ENCODE measurements at regions of chr1 and their contacts with region 1.

Region 1: GRCh38 chr1:2133039-2133878 is 61.3 kb downstream of the FAAP20 start:
- DNase-seq: peak; percentile 93 to 97 (median 96)
- ATAC-seq: peak; percentile 94
- H3K4me3 ChIP-seq: peak overlapping the region; percentile 66
- H3K4me3 Mint-ChIP-seq: peak overlapping the region; percentile 73 to 88 (median 83)
- H3K27ac ChIP-seq: peak overlapping the region; percentile 80
- H3K27ac Mint-ChIP-seq: peak overlapping the region; percentile 54 to 96 (median 93)
- H3K4me1 ChIP-seq: peaks cover 10% of the 10 kb centered on the region in 2 donors
- H3K4me1 Mint-ChIP-seq: peaks cover 5 to 32% (median 17%) of the 10 kb centered on the region in 7 donors
- H3K27me3 ChIP-seq: no peaks in the 10 kb centered on the region
- H3K27me3 Mint-ChIP-seq: no peaks in the 10 kb centered on the region

Region 2: DNA sequence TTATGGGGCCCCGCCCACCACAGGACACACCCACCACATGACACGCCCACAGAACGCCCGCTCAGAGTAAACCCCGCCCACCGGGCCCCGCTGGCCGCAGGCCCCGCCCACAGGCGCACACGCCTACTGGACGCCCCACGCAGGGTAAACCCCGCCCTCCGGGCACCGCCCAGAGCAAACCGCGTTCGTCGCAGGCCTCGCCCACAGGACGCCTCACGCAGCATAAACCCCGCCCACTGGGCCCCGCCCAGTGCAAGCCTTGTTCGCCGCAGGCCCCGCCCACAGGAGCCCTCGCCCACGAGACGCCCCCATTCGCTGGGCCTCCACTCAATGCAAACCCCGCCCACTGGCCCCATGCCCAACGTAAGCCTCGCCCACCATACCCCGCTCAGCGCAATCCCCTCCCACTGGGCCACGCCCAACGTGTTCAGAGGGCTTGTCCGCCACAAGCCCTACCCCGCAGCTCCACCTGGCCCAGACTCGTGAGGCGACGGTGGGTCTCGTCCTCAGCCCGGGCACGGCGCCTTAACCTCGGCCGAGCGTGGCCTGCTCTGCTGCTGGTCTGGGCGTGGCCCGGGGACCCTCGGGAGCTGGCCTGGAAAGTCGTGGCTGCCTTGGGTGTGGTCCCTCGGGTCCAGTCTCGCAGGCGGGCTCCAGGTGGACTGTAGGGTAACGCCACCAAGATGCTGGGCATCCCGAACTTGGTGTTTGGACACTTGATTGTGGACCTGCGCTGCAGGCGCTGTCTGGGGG is 213.8 kb before region 1 on chr1:
- CTCF ChIA-PET with region 1: no interaction called
- POLR2A ChIA-PET with region 1: no interaction called
- intact Hi-C with region 1: loop called (anchors 1 kb)
- DNase-seq: peak; percentile 99 to 100 (median 100)
- ATAC-seq: peak; percentile 95
- H3K4me3 ChIP-seq: peak overlapping the region; percentile 61
- H3K4me3 Mint-ChIP-seq: peak overlapping the region; percentile 52 to 79 (median 68)
- H3K27ac ChIP-seq: peak overlapping the region; percentile 58
- H3K27ac Mint-ChIP-seq: peak overlapping the region in 8 of 9 donors; percentile 51 to 89 (median 82)
- H3K4me1 ChIP-seq: peaks cover 7 to 16% of the 10 kb centered on the region in 2 donors
- H3K4me1 Mint-ChIP-seq: peaks cover 0 to 7% (median 0%) of the 10 kb centered on the region in 7 donors
- H3K27me3 ChIP-seq: no peaks in the 10 kb centered on the region
- H3K27me3 Mint-ChIP-seq: peaks cover 0 to 4% (median 0%) of the 10 kb centered on the region in 5 donors

Region 3: GRCh38 chr1:2148691-2149090 is 15.4 kb after region 1 on chr1:
- CTCF ChIA-PET with region 1: interaction called, 4 read pairs
- POLR2A ChIA-PET with region 1: no interaction called
- intact Hi-C with region 1: loop called in 1 of 2 experiments (anchors 1 kb)
- DNase-seq: peak in 8 of 9 donors; percentile 33 to 79 (median 67)
- ATAC-seq: peak; percentile 77
- H3K4me3 ChIP-seq: peak overlapping the region; percentile 51
- H3K4me3 Mint-ChIP-seq: no peak overlapping the region
- H3K27ac ChIP-seq: peak overlapping the region; percentile 54
- H3K27ac Mint-ChIP-seq: no peak overlapping the region
- H3K4me1 ChIP-seq: peaks cover 35 to 45% of the 10 kb centered on the region in 2 donors
- H3K4me1 Mint-ChIP-seq: peaks cover 0 to 27% (median 18%) of the 10 kb centered on the region in 7 donors
- H3K27me3 ChIP-seq: no peaks in the 10 kb centered on the region
- H3K27me3 Mint-ChIP-seq: no peaks in the 10 kb centered on the region

Region 4: GRCh38 chr1:2189459-2190425 is 56.5 kb after region 1 on chr1:
- CTCF ChIA-PET with region 1: no interaction called
- POLR2A ChIA-PET with region 1: interaction called, 3 read pairs
- intact Hi-C with region 1: loop called (anchors 1 to 2 kb)
- DNase-seq: peak; percentile 78 to 95 (median 91)
- ATAC-seq: peak; percentile 95
- H3K4me3 ChIP-seq: peak overlapping the region; percentile 80
- H3K4me3 Mint-ChIP-seq: peak overlapping the region; percentile 66 to 86 (median 80)
- H3K27ac ChIP-seq: peak overlapping the region; percentile 82
- H3K27ac Mint-ChIP-seq: peak overlapping the region; percentile 68 to 99 (median 95)
- H3K4me1 ChIP-seq: peaks cover 6 to 9% of the 10 kb centered on the region in 2 donors
- H3K4me1 Mint-ChIP-seq: peaks cover 0 to 23% (median 11%) of the 10 kb centered on the region in 7 donors
- H3K27me3 ChIP-seq: no peaks in the 10 kb centered on the region
- H3K27me3 Mint-ChIP-seq: no peaks in the 10 kb centered on the region

Region 5: GRCh38 chr1:2381741-2382620 is 248.7 kb after region 1 on chr1:
- CTCF ChIA-PET with region 1: interaction called, 3 read pairs
- POLR2A ChIA-PET with region 1: interaction called, 3 read pairs
- intact Hi-C with region 1: loop called in 1 of 2 experiments (anchors 5 kb)
- DNase-seq: peak; percentile 55 to 83 (median 71)
- ATAC-seq: peak; percentile 97
- H3K4me3 ChIP-seq: no peak overlapping the region
- H3K4me3 Mint-ChIP-seq: no peak overlapping the region
- H3K27ac ChIP-seq: no peak overlapping the region
- H3K27ac Mint-ChIP-seq: no peak overlapping the region
- H3K4me1 ChIP-seq: peaks cover 6 to 7% of the 10 kb centered on the region in 2 donors
- H3K4me1 Mint-ChIP-seq: peaks cover 0 to 4% (median 0%) of the 10 kb centered on the region in 7 donors
- H3K27me3 ChIP-seq: no peaks in the 10 kb centered on the region
- H3K27me3 Mint-ChIP-seq: no peaks in the 10 kb centered on the region

Region 6: DNA sequence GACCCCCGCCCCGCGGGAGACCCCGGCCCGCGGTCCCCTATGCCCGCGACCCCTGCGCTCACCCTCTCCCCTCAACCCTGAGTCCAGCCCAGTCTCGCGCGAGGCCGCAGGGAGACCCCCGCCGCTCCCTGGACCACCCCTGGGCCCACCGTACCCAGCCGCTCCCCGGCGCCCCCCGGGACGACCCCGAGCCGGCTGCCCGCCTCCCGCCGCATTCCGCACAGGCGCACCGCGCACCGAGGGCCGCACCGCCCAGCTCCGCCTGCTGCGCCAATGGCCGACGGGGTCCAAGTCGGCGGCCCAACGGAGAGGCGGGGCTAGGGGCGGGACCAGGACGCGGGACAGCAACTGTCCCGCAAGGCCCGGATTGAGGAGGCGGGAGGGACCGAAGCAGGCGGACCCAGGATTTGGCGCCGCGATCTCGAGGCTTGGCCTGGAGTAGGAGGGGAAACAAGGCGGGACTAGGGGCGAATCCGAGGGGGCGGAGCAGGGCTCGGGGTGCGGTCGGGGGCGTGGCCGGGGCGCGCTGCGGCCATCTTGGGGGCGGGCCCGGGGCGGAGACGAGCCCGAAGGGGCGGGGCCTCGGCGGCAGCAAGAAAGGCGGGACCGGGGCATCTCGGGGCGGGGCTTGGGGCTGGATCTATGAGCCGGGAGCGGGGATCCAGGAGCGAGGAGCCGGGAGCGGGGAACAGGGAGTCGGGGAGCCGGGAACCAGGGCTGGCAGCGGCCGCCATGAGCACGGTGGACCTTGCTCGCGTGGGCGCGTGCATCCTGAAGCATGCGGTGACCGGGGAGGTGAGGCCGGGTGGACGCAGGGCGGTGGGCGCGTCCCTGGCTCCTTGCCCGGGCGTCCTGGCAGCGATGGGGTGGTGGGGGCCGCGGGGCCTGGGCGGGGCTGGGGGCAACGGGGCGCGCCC is 453.2 kb after region 1 on chr1 and contains the start of gene PRXL2B:
- CTCF ChIA-PET with region 1: no interaction called
- POLR2A ChIA-PET with region 1: interaction called, 3 read pairs
- intact Hi-C with region 1: loop called (anchors 2 to 10 kb)
- DNase-seq: peak; percentile 90 to 100 (median 96)
- ATAC-seq: peak; percentile 86
- H3K4me3 ChIP-seq: peak within 1 kb of the TSS; percentile 78
- H3K4me3 Mint-ChIP-seq: peak within 1 kb of the TSS; percentile 81 to 96 (median 92)
- H3K27ac ChIP-seq: peak within 1 kb of the TSS; percentile 87
- H3K27ac Mint-ChIP-seq: peak within 1 kb of the TSS; percentile 87 to 99 (median 96)
- H3K4me1 ChIP-seq: peaks cover 27 to 30% of the 10 kb centered on the region in 2 donors
- H3K4me1 Mint-ChIP-seq: peaks cover 24 to 45% (median 38%) of the 10 kb centered on the region in 7 donors
- H3K27me3 ChIP-seq: no peaks in the 10 kb centered on the region
- H3K27me3 Mint-ChIP-seq: no peaks in the 10 kb centered on the region
- total RNA-seq, gene PRXL2B: 12.3 to 37.0 (median 26.7) TPM